AG04449 (cell line): ENCODE measurements at regions of chr7 and their contacts with region 1.

Region 1: DNA sequence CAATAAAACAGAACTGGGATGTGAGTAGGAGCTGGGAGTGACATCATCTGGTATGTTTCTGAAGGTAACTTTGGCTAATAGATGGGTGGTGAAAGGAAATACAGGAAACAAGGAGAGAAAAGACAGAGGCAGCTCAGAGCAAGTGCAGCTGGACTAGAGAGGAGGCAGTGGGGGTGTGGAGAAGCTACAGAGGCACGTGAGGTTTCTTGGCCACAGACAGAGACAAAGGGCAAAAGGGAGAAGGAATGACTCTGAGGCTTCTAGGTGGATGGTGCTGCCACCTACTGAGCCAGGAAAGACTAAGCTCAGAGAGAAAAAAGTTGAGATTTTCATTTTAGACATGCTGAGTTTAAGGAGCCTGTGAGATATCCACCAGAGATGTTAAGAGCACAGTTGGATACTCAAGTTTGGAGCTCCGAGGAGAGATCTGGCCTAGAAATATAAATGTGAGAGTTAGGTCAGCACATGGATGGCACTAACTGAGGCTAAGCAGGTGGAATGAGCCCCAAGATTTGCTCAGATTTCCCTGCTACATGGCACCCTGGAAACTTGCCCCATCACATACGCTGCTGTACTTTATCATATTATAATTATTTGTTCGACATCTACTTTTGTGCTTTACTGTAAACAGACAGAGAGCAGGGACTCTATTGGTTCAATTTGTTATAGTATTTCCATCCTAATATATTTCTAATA is 293.0 kb upstream of the IMMP2L start:
- DNase-seq: peak; percentile 9
- H3K4me3 ChIP-seq: no peak overlapping the region
- CTCF ChIP-seq: peak; percentile 65

Region 2: GRCh38 chr7:111752022-111752582 is 103.2 kb before region 1 on chr7:
- CTCF ChIA-PET with region 1: interaction called, 549 read pairs
- POLR2A ChIA-PET with region 1: no interaction called
- DNase-seq: no peak
- H3K4me3 ChIP-seq: no peak overlapping the region
- CTCF ChIP-seq: peak; percentile 80

Region 3: DNA sequence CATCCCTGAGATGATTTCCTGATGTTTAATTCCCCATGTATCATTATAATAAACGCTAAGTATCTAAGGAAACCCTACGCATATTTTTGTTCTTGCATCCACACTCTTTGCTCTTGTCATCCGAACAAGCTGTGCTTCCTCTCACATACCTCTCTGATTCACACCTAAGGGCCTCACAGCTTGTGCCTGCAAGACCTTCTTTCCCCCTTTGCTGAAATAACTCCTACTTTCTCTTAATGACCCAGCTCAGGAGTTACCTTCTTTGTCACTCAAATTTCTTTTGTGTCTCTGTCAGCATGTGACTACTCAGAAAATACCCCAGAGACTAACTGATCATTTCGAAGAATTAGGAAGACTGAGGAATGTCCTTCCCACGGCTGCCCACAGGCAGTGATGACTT is 83.7 kb before region 1 on chr7:
- CTCF ChIA-PET with region 1: interaction called, 70 read pairs
- POLR2A ChIA-PET with region 1: no interaction called
- DNase-seq: no peak
- H3K4me3 ChIP-seq: no peak overlapping the region
- CTCF ChIP-seq: no peak

Region 4: GRCh38 chr7:111841596-111842205 is 13.6 kb before region 1 on chr7:
- CTCF ChIA-PET with region 1: interaction called, 87 read pairs
- POLR2A ChIA-PET with region 1: no interaction called
- DNase-seq: peak; percentile 7
- H3K4me3 ChIP-seq: no peak overlapping the region
- CTCF ChIP-seq: no peak

Region 5: DNA sequence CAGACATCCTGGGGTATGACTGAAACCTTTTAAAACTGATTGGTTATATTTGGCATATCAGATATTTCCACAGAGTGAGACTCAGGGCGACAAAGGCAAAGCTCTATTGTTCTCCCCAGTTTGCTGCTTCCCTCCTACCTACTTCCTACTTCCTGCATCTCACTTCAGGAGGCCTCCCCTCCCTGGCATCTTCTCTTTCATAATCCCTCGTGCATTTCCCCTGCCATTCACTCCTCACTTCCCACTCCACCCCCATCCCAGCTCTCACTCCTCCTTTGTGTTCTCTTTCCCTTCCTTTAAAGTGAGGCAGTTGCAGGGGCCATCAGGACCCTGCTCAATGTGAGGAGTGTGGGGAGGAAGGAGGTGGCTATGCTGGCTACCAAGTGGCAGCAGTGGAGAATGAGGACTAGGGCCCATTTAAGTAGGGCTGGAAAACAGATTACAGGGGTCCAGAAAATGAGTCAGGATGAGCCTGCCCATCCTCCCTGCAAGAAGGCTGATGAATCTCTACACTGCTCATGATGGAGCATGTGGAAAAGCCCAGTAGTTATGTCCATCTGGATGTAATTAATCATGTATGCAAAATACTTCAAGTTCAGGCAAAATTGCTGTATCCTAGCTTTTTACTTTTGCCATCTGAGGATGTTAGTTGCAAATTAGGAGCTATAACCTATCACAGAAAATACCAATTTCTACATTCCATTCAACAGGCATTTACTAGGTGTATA is 18.8 kb after region 1 on chr7:
- CTCF ChIA-PET with region 1: interaction called, 104 read pairs
- POLR2A ChIA-PET with region 1: no interaction called
- DNase-seq: no peak
- H3K4me3 ChIP-seq: no peak overlapping the region
- CTCF ChIP-seq: no peak

Region 6: GRCh38 chr7:112023282-112023681 is 168.0 kb after region 1 on chr7:
- CTCF ChIA-PET with region 1: no interaction called
- POLR2A ChIA-PET with region 1: no interaction called
- DNase-seq: no peak
- H3K4me3 ChIP-seq: no peak overlapping the region
- CTCF ChIP-seq: no peak

Region 7: DNA sequence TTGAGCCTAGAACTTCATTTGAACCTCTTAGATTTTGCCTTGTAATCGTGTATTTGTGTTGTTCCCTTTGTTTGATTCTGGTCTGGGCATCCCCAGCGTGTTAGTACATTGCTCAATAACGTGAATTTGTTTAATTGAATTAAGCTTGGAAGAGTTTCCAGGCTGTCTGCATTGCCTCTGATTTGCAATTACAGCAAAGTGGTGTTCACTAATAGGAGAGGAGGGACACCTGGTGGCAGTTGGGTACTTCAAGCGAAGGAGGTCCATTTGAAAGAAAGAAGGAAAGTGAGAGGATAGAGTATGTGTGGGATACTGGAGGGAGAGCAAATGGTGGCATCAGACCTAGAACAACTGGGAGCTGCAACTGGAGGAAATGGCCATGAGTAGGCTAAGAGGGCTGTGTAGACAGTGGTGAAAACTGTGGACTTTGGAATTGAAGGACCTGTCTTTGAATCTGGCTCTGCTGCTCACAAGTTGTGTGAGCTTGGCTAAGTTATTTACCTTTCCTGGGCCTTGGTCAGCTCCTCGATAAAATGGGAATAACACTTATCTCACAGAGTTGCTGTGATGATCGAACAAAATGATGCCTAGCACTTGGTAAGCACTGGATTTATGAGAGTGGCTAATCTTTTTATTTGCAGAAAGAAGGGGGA is 640.6 kb after region 1 on chr7:
- CTCF ChIA-PET with region 1: interaction called, 12 read pairs
- POLR2A ChIA-PET with region 1: no interaction called
- DNase-seq: no peak
- H3K4me3 ChIP-seq: no peak overlapping the region
- CTCF ChIP-seq: peak; percentile 49